Naive thymus-derived CD4-positive, alpha-beta T cell (primary cell): ENCODE measurements at regions of chr13 and their contacts with region 1.

Region 1: GRCh38 chr13:109778102-109778542 is 8.3 kb downstream of the IRS2 start:
- DNase-seq: no peak
- ATAC-seq: no peak
- H3K4me3 ChIP-seq: no peak overlapping the region
- H3K4me3 Mint-ChIP-seq: peak overlapping the region in 9 of 10 donors; percentile 46 to 89 (median 76)
- H3K27ac ChIP-seq: no peak overlapping the region
- H3K27ac Mint-ChIP-seq: peak overlapping the region; percentile 14 to 77 (median 62)
- H3K4me1 ChIP-seq: peaks cover 28 to 45% of the 10 kb centered on the region in 2 donors
- H3K4me1 Mint-ChIP-seq: peaks cover 42 to 75% (median 66%) of the 10 kb centered on the region in 7 donors
- H3K27me3 ChIP-seq: no peaks in the 10 kb centered on the region
- H3K27me3 Mint-ChIP-seq: no peaks in the 10 kb centered on the region

Region 2: GRCh38 chr13:109698779-109699178 is 79.3 kb before region 1 on chr13:
- CTCF ChIA-PET with region 1: no interaction called
- POLR2A ChIA-PET with region 1: no interaction called
- intact Hi-C with region 1: loop called in 1 of 2 experiments (anchors 5 kb)
- DNase-seq: no peak
- ATAC-seq: no peak
- H3K4me3 ChIP-seq: no peak overlapping the region
- H3K4me3 Mint-ChIP-seq: no peak overlapping the region
- H3K27ac ChIP-seq: no peak overlapping the region
- H3K27ac Mint-ChIP-seq: no peak overlapping the region
- H3K4me1 ChIP-seq: peaks cover 0 to 5% of the 10 kb centered on the region in 2 donors
- H3K4me1 Mint-ChIP-seq: peaks cover 0 to 9% (median 9%) of the 10 kb centered on the region in 7 donors
- H3K27me3 ChIP-seq: no peaks in the 10 kb centered on the region
- H3K27me3 Mint-ChIP-seq: peaks cover 0 to 8% (median 6%) of the 10 kb centered on the region in 5 donors

Region 3: GRCh38 chr13:109764470-109765291 is 13.4 kb before region 1 on chr13:
- CTCF ChIA-PET with region 1: interaction called, 6 read pairs
- POLR2A ChIA-PET with region 1: interaction called, 5 read pairs
- intact Hi-C with region 1: loop called (anchors 1 to 2 kb)
- DNase-seq: peak in 3 of 9 donors; percentile 27 to 39 (median 33)
- ATAC-seq: peak; percentile 71
- H3K4me3 ChIP-seq: no peak overlapping the region
- H3K4me3 Mint-ChIP-seq: peak overlapping the region in 6 of 10 donors; percentile 1 to 62 (median 24)
- H3K27ac ChIP-seq: no peak overlapping the region
- H3K27ac Mint-ChIP-seq: peak overlapping the region in 5 of 9 donors; percentile 23 to 70 (median 43)
- H3K4me1 ChIP-seq: peaks cover 0 to 16% of the 10 kb centered on the region in 2 donors
- H3K4me1 Mint-ChIP-seq: peaks cover 8 to 81% (median 62%) of the 10 kb centered on the region in 7 donors
- H3K27me3 ChIP-seq: no peaks in the 10 kb centered on the region
- H3K27me3 Mint-ChIP-seq: no peaks in the 10 kb centered on the region